Activated CD4-positive, alpha-beta T cell treated with anti-CD3 and anti-CD28 coated beads, Interleukin-2, amount 10 ng/mL, durations not matched to agents 24 days and 14 days (primary cell): ENCODE measurements at regions of chr21 and their contacts with region 1.

Region 1: GRCh38 chr21:42524349-42525151 is 10.9 kb downstream of the SLC37A1 start:
- DNase-seq: peak; percentile 76
- H3K4me3 Mint-ChIP-seq: no peak overlapping the region
- H3K27ac Mint-ChIP-seq: no peak overlapping the region
- H3K4me1 Mint-ChIP-seq: peaks cover 36% of the 10 kb centered on the region
- H3K27me3 Mint-ChIP-seq: no peaks in the 10 kb centered on the region

Region 2: DNA sequence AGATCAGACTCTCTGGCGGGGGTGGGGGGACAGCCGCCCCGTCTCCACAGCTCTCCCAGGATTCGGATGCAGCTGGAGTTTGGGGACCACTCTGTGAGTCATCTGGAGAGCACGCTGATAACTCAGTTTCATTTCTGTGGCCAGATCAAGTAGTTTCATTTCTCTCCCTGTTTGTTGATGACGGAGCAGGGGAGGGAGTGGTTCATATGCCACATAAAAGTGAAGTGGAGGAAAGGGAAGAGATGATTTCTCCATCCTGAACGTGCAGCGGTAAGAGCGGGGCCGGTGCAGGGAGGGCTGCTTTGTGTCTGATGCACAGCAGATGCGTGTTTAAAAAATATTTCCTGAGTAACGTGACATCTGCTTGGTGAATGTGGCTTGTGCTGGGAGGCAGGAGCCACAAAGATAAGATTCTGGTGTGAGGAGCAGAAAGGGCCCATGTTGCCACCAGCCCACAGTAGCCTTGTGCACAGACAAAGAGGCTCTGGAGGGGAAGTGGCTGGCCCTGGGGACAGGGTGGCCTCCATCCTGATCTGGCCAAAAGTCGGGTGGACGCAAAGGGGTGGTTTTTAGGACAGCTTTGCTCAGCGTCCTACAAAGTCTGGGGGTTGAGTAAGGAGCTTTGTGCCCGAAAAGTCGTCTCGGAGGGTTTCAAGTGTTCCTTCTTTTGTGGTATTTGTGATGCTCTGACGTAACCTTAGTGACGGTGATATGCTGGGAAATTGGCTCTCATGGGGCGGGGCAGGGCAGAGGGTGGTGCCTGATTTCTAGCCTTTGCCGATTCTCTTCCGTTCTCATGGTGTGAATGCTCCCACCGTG is 1162.6 kb before region 1 on chr21 and contains the start of gene MX2:
- intact Hi-C with region 1: loop called (anchors 10 kb)
- DNase-seq: peak; percentile 95
- H3K4me3 Mint-ChIP-seq: peak within 1 kb of the TSS; percentile 89
- H3K27ac Mint-ChIP-seq: peak within 1 kb of the TSS; percentile 95
- H3K4me1 Mint-ChIP-seq: peaks cover 54% of the 10 kb centered on the region
- H3K27me3 Mint-ChIP-seq: peaks cover 2% of the 10 kb centered on the region
- total RNA-seq, gene MX2: 8.6 and 11.5 TPM in 2 replicates

Region 3: DNA sequence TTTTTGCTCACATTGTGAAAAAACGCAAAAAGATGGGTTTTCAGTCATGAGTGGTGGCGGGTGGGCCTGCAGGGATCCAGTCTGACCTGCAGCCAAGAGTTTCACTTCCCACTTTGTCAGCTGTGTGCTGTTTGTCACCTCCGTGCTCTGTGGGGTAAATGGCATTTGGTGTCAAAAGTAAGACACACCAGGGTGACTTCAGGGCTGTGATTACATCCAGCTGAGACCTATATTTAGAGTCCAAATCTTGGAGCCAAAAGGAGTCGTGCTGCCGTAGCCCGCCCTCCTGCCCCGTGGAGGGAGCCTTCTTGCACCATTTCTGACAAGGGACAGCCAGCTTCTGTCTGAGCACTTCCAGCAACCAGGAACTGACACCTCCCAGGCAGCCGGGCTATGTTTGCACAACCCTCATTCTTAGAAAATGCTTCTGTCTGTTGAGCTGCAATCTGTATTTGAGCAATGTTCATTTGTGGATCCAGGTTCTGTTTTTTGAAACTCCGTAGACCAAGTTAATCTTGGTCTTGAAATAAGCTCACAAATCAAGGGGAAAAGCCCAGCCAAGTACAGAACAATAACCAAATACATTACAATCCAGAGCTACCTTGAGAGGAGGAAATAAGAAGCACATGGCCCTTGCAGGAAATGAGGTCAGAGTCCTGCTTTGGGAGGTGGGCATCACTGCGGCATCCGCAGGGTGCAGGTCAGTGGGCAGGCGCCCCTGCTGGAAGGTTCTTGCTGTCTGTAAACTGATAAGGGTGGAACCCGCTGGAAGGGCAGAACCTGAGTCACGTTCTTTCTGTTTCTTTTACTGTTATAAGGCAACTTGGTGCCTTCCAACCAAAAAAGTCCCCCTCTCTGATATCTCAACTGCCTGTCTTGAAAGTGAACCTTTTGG is 291.2 kb before region 1 on chr21:
- intact Hi-C with region 1: loop called (anchors 5 kb)
- DNase-seq: peak; percentile 93
- H3K4me3 Mint-ChIP-seq: peak overlapping the region; percentile 82
- H3K27ac Mint-ChIP-seq: peak overlapping the region; percentile 97
- H3K4me1 Mint-ChIP-seq: peaks cover 84% of the 10 kb centered on the region
- H3K27me3 Mint-ChIP-seq: no peaks in the 10 kb centered on the region

Region 4: GRCh38 chr21:42414928-42415769 is 109.4 kb before region 1 on chr21:
- intact Hi-C with region 1: loop called (anchors 5 kb)
- DNase-seq: peak; percentile 96
- H3K4me3 Mint-ChIP-seq: peak overlapping the region; percentile 77
- H3K27ac Mint-ChIP-seq: peak overlapping the region; percentile 99
- H3K4me1 Mint-ChIP-seq: peaks cover 58% of the 10 kb centered on the region
- H3K27me3 Mint-ChIP-seq: no peaks in the 10 kb centered on the region

Region 5: DNA sequence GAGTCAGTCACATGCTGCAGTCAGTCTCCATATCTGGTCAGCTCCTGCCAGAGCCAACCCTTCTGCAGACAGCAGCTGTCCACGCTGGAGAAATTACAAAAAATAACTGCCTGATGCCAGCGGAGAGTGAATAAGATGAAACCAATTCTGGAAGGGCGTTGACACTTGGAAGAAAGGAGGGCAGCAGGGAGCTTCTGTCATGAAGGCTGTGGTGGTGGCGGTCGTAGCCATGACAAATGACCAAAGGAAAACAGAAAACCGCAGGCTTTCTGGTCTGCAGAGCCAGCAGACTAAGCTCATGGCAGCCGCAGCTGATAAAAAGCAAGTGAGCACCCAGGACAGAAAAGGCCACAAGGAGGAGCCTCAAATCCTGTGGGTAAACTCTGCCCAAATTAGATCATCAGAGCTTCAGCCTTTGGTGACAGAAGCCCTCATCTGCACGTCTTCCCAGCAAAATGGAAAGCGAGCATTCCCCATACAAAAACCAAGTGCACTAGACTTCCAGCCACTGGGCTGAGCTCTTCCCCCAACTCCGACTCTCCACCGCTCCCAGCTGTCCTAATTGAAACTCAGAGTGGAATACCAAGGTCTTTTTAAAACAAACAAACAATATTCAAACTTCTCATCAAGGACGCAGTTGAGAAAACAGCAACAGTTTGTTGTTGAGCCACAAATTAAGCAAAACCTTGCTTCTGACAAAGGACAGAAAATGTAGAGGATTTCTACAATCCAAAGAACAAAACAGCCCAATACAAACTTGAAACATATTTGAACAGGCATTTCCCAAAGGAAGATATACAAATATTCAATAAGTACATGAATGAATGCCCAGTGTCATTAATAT is 57.2 kb before region 1 on chr21:
- intact Hi-C with region 1: loop called (anchors 5 kb)
- DNase-seq: peak; percentile 75
- H3K4me3 Mint-ChIP-seq: no peak overlapping the region
- H3K27ac Mint-ChIP-seq: no peak overlapping the region
- H3K4me1 Mint-ChIP-seq: peaks cover 42% of the 10 kb centered on the region
- H3K27me3 Mint-ChIP-seq: peaks cover 5% of the 10 kb centered on the region

Region 6: DNA sequence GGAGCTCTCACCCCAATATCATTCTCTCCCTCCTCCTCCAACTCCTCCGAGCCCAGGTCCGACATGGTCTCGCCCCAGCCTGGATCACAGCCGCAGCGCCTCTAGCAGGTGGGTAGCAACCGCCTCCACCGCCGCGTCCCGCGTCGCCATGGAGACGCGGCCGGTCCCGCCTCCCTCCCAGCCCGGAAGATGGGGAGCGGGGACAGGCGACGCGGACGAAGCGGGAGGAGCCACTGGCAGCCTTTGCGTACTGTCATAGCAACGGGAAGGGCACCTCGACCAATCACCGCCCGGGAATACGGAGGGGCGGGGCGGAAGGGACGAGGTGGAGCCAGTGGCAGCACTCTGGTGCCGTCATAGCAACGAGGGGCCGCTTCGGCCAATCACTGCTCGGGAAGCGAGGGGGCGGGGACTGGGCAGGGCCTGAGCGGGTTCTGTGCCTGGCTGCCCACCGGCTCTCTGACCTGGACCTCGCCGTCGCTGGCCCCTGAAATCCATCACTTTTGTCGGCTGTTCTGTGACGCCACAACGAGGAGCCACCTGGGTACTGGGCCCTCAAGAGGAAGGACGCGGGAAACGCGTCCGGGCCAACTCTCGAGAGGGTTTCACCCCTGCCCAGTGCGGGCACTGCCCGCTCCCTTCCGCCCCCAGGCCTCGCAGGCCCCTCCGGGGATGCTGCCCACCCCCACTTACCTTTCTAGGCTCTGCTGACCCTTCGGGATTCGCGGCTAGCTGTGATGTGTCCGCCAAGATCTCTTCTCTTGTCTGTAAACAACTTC is 28.2 kb before region 1 on chr21 and contains the start of gene RSPH1:
- intact Hi-C with region 1: loop called (anchors 2 kb)
- DNase-seq: peak; percentile 100
- H3K4me3 Mint-ChIP-seq: peak within 1 kb of the TSS; percentile 88
- H3K27ac Mint-ChIP-seq: peak within 1 kb of the TSS; percentile 88
- H3K4me1 Mint-ChIP-seq: peaks cover 21% of the 10 kb centered on the region
- H3K27me3 Mint-ChIP-seq: peaks cover 18% of the 10 kb centered on the region
- total RNA-seq, gene RSPH1: not detected in 2 replicates

Region 7: DNA sequence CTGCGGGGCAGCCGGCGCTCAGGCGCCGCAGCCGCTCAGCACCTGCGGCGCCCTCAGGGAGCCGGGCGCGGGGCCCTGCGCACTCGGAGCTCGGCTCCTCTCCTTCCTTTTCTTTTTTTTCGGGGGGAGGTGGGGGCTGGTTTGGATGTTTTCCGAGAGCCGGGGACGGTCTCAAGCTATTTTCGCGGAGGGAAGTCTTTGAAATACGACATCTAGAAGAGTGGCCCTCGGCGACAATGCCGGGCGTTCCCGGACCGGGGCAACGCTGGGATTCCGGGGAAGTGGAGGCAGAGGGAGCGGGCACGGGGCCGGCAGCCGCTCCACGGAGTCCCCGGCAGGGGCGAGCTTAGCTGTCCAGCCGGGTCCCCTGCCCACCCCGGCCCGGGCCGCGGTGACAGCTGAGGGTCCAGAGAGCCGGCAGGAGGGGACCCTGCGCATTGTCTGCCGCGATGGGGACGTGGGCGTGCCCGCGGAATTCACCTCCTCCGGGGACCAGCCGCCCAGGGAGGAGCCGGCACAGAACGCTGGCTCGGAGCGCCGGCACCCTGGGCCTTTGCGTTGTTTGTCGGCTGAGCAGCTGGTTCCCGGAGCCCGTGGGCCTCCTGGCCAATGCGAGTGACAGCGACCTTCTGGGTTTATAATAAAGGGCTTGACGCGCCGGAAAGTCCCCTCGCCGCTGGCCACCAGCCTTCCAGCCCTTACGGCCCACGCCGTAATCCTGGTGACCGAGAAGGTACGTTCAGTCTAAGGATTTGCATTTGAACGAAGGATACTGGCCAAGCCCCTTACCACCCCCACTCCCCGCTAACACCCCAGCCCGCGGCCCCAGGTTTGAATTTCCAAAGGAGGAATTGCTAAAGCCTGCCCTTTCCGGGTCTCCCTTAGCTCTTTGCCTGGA is 10.3 kb before region 1 on chr21:
- intact Hi-C with region 1: loop called (anchors 1 kb)
- DNase-seq: peak; percentile 90
- H3K4me3 Mint-ChIP-seq: peak overlapping the region; percentile 78
- H3K27ac Mint-ChIP-seq: peak overlapping the region; percentile 10
- H3K4me1 Mint-ChIP-seq: peaks cover 20% of the 10 kb centered on the region
- H3K27me3 Mint-ChIP-seq: peaks cover 14% of the 10 kb centered on the region

Region 8: DNA sequence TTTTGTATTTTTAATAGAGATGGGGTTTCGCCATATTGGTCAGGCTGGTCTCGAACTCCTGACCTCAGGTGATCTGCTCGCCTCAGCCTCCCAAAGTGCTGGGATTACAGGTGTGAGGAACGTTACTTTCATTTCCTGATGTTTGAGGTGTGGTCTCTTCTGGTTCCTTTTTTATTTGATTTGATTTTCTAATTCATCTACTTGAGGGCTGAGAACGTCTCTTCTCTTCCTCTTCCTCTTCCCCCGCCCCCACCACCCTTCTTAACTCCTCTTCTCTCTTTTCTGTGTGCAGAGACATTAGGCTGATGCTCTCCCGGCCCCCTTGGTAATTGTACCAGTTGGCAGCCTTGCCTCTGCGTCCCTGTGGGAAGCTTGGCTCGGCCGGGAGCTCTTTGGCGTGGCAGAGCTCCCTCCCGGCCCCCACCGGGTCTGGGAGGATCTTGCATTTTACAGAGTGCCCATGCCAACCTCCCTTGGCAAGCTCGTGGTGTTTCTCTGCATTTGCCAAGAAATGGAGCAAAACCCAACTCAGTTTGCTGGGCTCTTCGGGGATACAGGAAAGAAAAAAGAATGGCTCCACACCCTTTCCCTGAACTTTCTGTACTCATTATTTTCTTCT is 664.2 kb after region 1 on chr21:
- intact Hi-C with region 1: no loop called
- DNase-seq: no peak
- H3K4me3 Mint-ChIP-seq: no peak overlapping the region
- H3K27ac Mint-ChIP-seq: no peak overlapping the region
- H3K4me1 Mint-ChIP-seq: peaks cover 4% of the 10 kb centered on the region
- H3K27me3 Mint-ChIP-seq: peaks cover 4% of the 10 kb centered on the region